Activated CD4-positive, alpha-beta memory T cell treated with anti-CD3 and anti-CD28 coated beads for 36 hours (primary cell): ENCODE measurements at regions of chr3 and their contacts with region 1.

Region 1: GRCh38 chr3:32238453-32239306 is at the start of gene CMTM8:
- DNase-seq: peak; percentile 75
- H3K4me3 Mint-ChIP-seq: peak within 1 kb of the TSS; percentile 81
- H3K27ac Mint-ChIP-seq: peak within 1 kb of the TSS; percentile 34
- H3K4me1 Mint-ChIP-seq: peaks cover 31% of the 10 kb centered on the region
- H3K27me3 Mint-ChIP-seq: peaks cover 4% of the 10 kb centered on the region
- total RNA-seq, gene CMTM8: 11.6 to 13.0 TPM

Region 2: GRCh38 chr3:32226870-32227500 is 11.7 kb before region 1 on chr3:
- CTCF ChIA-PET with region 1: interaction called, 10 read pairs
- POLR2A ChIA-PET with region 1: no interaction called
- intact Hi-C with region 1: no loop called
- DNase-seq: no peak
- H3K4me3 Mint-ChIP-seq: no peak overlapping the region
- H3K27ac Mint-ChIP-seq: no peak overlapping the region
- H3K4me1 Mint-ChIP-seq: peaks cover 9% of the 10 kb centered on the region
- H3K27me3 Mint-ChIP-seq: peaks cover 1% of the 10 kb centered on the region

Region 3: DNA sequence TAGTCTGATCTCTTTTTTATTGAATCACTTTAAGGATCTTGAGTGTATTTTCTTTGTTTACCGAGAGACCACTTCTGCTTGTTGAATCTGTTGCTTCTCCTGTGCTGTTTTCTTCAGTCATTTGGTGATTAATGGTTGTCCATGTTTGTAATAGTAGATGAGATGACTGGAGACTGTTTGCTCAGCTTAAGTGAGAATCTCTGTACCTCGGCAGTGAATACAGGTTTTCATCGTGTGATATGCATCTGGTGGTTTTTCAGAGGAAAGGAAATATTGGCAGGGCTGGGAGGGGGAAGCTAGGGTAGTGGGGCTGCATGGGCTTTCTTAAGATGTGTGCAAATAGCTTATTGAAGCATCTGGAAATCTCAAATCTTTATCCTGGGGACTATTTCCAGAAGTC is 19.0 kb after region 1 on chr3:
- CTCF ChIA-PET with region 1: interaction called, 18 read pairs
- POLR2A ChIA-PET with region 1: interaction called, 3 read pairs
- intact Hi-C with region 1: no loop called
- DNase-seq: peak; percentile 26
- H3K4me3 Mint-ChIP-seq: no peak overlapping the region
- H3K27ac Mint-ChIP-seq: no peak overlapping the region
- H3K4me1 Mint-ChIP-seq: peaks cover 22% of the 10 kb centered on the region
- H3K27me3 Mint-ChIP-seq: no peaks in the 10 kb centered on the region

Region 4: DNA sequence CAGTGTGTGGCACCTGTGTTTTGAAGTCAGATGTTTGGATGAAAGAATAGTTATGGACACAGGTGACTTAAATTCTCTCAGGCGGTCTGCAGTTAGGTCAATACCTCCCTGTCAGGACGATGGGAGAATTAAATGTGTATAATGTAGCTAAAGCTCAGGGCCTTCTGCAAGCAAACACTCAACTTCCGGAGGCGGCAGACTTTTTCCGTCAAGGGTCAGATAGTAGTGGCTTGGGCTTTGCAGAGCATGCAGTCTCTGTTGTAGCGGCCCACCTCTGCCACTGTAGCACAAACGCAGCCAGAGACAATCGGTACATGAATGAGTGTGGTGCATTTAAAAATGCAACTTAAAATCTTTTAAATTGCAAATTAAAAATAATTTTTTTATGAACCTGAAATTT is 47.2 kb after region 1 on chr3:
- CTCF ChIA-PET with region 1: interaction called, 19 read pairs
- POLR2A ChIA-PET with region 1: no interaction called
- intact Hi-C with region 1: loop called (anchors 2 kb)
- DNase-seq: peak; percentile 45
- H3K4me3 Mint-ChIP-seq: no peak overlapping the region
- H3K27ac Mint-ChIP-seq: peak overlapping the region; percentile 69
- H3K4me1 Mint-ChIP-seq: peaks cover 48% of the 10 kb centered on the region
- H3K27me3 Mint-ChIP-seq: no peaks in the 10 kb centered on the region

Region 5: DNA sequence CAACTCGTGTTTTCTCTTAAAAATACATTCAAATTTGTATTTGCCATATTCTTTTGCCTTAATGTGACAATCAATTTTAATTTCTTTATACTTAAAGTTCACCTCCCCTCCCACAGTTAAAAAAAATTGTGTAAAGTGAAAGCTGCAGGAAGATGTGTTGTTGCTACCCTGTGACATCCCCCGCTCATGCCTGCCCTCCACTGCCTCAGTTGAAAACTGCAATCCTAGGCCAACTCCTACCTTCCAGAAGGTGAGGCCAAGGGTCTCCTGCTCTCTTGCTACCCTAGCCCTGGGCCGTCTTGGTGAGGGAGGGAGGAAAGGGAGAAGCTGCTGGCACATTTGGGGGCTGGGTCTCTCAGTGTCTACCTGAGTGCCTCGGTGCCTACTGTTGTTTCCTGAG is 96.0 kb after region 1 on chr3:
- CTCF ChIA-PET with region 1: interaction called, 22 read pairs
- POLR2A ChIA-PET with region 1: no interaction called
- intact Hi-C with region 1: no loop called
- DNase-seq: peak; percentile 80
- H3K4me3 Mint-ChIP-seq: no peak overlapping the region
- H3K27ac Mint-ChIP-seq: no peak overlapping the region
- H3K4me1 Mint-ChIP-seq: peaks cover 48% of the 10 kb centered on the region
- H3K27me3 Mint-ChIP-seq: no peaks in the 10 kb centered on the region

Region 6: GRCh38 chr3:32391643-32392535 is 153.2 kb after region 1 on chr3 and contains the start of gene CMTM7:
- CTCF ChIA-PET with region 1: interaction called, 4 read pairs
- POLR2A ChIA-PET with region 1: no interaction called
- intact Hi-C with region 1: loop called (anchors 5 kb)
- DNase-seq: peak; percentile 81
- H3K4me3 Mint-ChIP-seq: peak within 1 kb of the TSS; percentile 98
- H3K27ac Mint-ChIP-seq: peak within 1 kb of the TSS; percentile 95
- H3K4me1 Mint-ChIP-seq: peaks cover 55% of the 10 kb centered on the region
- H3K27me3 Mint-ChIP-seq: no peaks in the 10 kb centered on the region
- total RNA-seq, gene CMTM7: 46.1 to 47.1 TPM